CD8-positive, alpha-beta T cell (primary cell): ENCODE measurements at regions of chrX and their contacts with region 1.

Region 1: GRCh38 chrX:44898411-44899221 is 25.6 kb downstream of the KDM6A start:
- DNase-seq: peak in 2 of 9 experiments; percentile 2 to 25
- ATAC-seq: peak; percentile 23
- H3K4me3 ChIP-seq: no peak overlapping the region
- H3K4me3 Mint-ChIP-seq: peak overlapping the region; percentile 11
- H3K27ac ChIP-seq: no peak overlapping the region
- H3K27ac Mint-ChIP-seq: peak overlapping the region; percentile 18
- H3K4me1 ChIP-seq: peaks cover 19% of the 10 kb centered on the region
- H3K4me1 Mint-ChIP-seq: peaks cover 49% of the 10 kb centered on the region
- H3K27me3 ChIP-seq: no peaks in the 10 kb centered on the region
- H3K27me3 Mint-ChIP-seq: no peaks in the 10 kb centered on the region
- CTCF ChIP-seq: no peak

Region 2: DNA sequence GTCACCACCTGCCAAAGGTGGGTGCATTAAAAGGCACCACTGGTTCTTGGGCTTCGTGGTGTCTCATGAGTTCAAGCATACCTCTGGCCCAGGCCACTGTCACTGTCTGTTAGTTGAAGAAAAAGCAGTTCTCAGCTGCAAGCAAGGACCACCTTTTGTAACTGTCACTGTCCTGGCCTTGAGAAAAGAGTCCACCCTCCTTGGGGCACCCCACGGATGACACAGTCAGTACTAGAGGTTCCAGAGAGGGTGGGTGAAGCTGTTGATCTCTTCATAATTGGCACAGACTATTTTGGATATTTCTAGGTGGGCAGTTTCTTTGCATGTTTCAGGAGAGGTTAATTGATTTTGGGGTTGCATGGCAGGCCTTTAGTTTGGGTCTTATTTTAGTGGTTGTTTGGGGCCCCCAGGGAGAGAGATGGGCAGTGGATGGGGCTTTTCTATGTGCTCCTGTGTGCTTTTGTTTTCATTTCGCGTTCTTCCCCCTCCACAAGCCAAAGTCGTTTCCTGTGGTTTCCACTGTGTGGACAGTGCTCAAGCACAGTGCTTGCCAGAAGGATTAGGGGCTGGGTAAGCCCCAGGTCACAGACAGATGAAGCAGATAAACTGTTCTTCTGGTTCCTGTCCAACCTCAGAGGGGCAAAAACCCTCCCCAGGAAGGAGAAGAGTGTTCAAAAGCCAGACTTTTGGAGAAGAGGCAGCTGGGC is 1964.4 kb before region 1 on chrX:
- CTCF ChIA-PET with region 1: no interaction called
- POLR2A ChIA-PET with region 1: no interaction called
- intact Hi-C with region 1: loop called in 1 of 2 experiments (anchors 10 kb)
- DNase-seq: peak in 6 of 9 experiments; percentile 11 to 67 (median 44)
- ATAC-seq: peak; percentile 48
- H3K4me3 ChIP-seq: no peak overlapping the region
- H3K4me3 Mint-ChIP-seq: peak overlapping the region; percentile 42
- H3K27ac ChIP-seq: peak overlapping the region in 1 of 2 experiments; percentile 57
- H3K27ac Mint-ChIP-seq: peak overlapping the region; percentile 85
- H3K4me1 ChIP-seq: peaks cover 29% of the 10 kb centered on the region
- H3K4me1 Mint-ChIP-seq: peaks cover 25% of the 10 kb centered on the region
- H3K27me3 ChIP-seq: no peaks in the 10 kb centered on the region
- H3K27me3 Mint-ChIP-seq: no peaks in the 10 kb centered on the region
- CTCF ChIP-seq: no peak